ENCODE measurements at regions of chr18 and their contacts with region 1.

Region 1: DNA sequence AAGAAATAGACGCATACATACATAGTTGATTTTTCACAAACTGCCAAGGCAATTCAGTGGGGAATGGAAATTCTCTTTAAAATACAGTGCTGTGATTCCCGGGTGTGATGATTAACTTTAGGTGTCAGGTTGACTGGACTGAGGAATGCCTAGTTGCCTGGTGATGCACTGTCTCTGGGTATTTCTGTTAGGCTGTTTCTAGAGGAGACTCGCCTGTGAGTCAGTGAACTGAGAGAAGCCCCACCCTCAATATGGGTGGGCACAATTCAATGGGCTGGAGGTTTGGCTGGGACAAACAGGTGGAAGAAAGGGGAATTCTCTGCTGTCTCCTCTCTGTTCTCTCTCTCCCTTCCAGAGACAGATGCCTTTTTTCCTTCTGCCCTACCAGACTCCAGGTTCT is 187.6 kb downstream of the ARHGAP28 start:
- DNase-seq: no peak
- H3K4me3 Mint-ChIP-seq: no peak overlapping the region
- H3K27ac Mint-ChIP-seq: no peak overlapping the region
- H3K4me1 Mint-ChIP-seq: no peaks in the 10 kb centered on the region
- H3K27me3 Mint-ChIP-seq: no peaks in the 10 kb centered on the region

Region 2: DNA sequence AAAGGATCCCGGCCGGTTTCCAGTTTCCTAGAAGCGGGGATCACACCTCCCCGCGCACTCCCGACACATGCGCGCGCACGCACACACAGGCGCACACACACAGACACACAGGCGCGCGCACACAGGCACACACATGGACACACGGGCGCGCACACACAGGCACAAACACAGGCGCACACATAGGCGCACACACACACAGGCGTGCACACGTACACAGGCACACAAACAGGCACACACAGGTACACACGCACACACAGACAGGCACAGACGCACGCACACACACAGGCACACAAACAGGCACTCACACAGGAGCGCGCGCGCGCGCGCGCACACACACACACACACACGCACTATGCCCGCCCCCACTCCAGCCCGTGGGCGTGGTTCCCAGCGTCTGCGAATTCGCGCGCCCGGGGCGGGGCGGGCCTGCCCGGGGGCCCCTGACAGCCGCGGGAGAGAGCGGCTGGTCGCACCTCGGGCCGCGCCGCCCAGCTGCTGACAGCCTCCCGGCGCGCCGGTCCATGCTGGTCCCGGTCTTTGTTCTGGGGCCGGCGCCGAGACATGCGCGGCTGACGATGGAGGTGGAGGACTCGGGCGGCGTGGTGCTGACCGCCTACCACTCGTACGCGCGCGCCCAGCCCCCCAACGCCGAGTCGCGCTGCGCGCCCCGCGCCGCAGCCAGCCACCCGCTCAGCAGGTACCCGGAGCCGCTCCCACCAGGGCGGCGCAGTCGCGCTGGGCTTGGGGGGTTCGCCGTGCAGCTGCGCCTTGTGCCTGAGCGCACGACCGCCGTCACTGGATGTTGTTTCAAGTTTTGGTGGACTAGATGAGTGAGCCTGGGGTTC is 187.6 kb before region 1 on chr18 and contains the start of gene ARHGAP28:
- intact Hi-C with region 1: loop called (anchors 10 kb)
- DNase-seq: no peak
- H3K4me3 Mint-ChIP-seq: peak within 1 kb of the TSS; percentile 78
- H3K27ac Mint-ChIP-seq: no peak within 1 kb of the TSS
- H3K4me1 Mint-ChIP-seq: peaks cover 3% of the 10 kb centered on the region
- H3K27me3 Mint-ChIP-seq: peaks cover 18% of the 10 kb centered on the region
- total RNA-seq, gene ARHGAP28: not detected in 2 replicates